ENCODE measurements at regions of chr6 and their contacts with region 1.

Region 1: GRCh38 chr6:116100419-116101301 is at the start of gene NT5DC1:
- DNase-seq: peak; percentile 76 to 88
- ATAC-seq: peak; percentile 94 to 98 (median 96)
- H3K4me3 ChIP-seq: peak within 1 kb of the TSS; percentile 71 to 94 (median 89)
- H3K27ac ChIP-seq: peak within 1 kb of the TSS; percentile 83 to 98 (median 96)
- H3K4me1 ChIP-seq: peaks cover 3 to 58% (median 38%) of the 10 kb centered on the region in 9 donors
- H3K27me3 ChIP-seq: no peaks in the 10 kb centered on the region
- CTCF ChIP-seq: peak in 8 of 9 donors; percentile 16 to 61 (median 44)
- total RNA-seq, gene NT5DC1: 53.9 to 69.7 (median 60.4) TPM

Region 2: DNA sequence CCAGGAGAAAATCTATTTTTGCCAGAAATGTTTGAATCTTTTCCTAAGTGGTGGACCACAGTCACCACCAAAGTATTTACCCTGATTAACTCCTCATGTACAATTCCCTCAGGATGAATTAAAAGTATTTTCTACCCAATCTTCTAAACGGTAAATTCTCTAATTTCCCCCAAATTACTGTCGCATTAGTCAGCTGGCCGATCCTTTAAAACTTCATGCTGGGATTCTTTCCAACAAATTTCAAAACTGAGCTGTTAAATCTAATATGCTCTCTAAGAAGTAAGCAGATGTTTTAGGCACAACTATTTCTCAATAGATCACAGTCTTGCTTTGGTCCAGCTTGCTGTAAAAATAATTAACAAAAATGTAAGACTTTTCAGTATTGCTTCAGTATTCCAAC is 487.2 kb before region 1 on chr6:
- intact Hi-C with region 1: loop called in 1 of 10 experiments (anchors 10 kb)
- DNase-seq: no peak
- ATAC-seq: peak in 1 of 8 donors; percentile 44
- H3K4me3 ChIP-seq: no peak overlapping the region
- H3K27ac ChIP-seq: no peak overlapping the region
- H3K4me1 ChIP-seq: no peaks in the 10 kb centered on the region
- H3K27me3 ChIP-seq: no peaks in the 10 kb centered on the region
- CTCF ChIP-seq: no peak

Region 3: DNA sequence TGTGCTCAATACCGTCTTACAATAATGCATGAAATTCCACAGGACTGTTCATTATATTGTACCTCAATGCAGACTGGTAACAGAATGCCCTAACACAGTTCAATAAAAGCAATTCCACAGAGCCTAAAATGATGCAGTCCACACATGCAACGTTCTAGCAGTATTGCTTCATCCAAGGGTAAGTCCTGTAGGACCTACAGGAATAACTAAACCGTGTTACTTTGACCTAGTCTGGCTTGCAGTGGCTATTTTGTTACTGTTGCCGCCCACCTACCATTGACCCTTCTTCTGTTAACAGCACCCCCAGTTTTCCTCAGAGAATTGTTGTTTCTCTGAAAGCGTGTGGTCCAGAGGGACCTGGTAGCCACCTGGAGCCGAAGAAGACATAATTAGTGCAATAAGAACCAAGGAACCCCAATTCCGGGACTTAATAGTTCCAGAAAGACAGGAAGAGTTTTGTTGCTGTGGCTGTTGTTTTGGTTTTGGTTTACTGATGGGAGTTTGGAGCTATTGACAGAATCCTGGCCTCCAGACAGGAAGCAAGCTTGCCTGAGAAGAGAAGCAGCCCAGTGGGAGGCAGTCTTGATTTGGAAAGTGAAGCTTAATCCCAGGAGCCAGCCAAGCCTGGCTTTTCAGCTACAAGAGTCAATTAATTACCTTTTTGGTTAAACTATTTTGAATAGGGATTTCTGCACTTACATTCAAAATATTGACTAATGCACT is 131.3 kb before region 1 on chr6:
- intact Hi-C with region 1: no loop called
- DNase-seq: peak in 1 of 2 donors; percentile 8
- ATAC-seq: peak in 1 of 8 donors; percentile 63
- H3K4me3 ChIP-seq: no peak overlapping the region
- H3K27ac ChIP-seq: peak overlapping the region in 2 of 10 donors; percentile 25 to 31
- H3K4me1 ChIP-seq: peaks cover 0 to 21% (median 12%) of the 10 kb centered on the region in 9 donors
- H3K27me3 ChIP-seq: no peaks in the 10 kb centered on the region
- CTCF ChIP-seq: peak in 3 of 9 donors; percentile 16 to 36 (median 35)

Region 4: GRCh38 chr6:116010790-116011401 is 89.8 kb before region 1 on chr6:
- intact Hi-C with region 1: loop called (anchors 2 to 5 kb)
- DNase-seq: peak; percentile 54 to 71
- ATAC-seq: peak; percentile 53 to 82 (median 76)
- H3K4me3 ChIP-seq: no peak overlapping the region
- H3K27ac ChIP-seq: peak overlapping the region in 4 of 10 donors; percentile 6 to 82 (median 56)
- H3K4me1 ChIP-seq: peaks cover 0 to 57% (median 25%) of the 10 kb centered on the region in 9 donors
- H3K27me3 ChIP-seq: no peaks in the 10 kb centered on the region
- CTCF ChIP-seq: peak; percentile 48 to 90 (median 85)

Region 5: GRCh38 chr6:116034327-116034726 is 66.3 kb before region 1 on chr6:
- intact Hi-C with region 1: no loop called
- DNase-seq: no peak
- ATAC-seq: peak in 3 of 8 donors; percentile 38 to 49 (median 42)
- H3K4me3 ChIP-seq: no peak overlapping the region
- H3K27ac ChIP-seq: peak overlapping the region in 1 of 10 donors; percentile 27
- H3K4me1 ChIP-seq: peaks cover 0 to 50% (median 22%) of the 10 kb centered on the region in 9 donors
- H3K27me3 ChIP-seq: no peaks in the 10 kb centered on the region
- CTCF ChIP-seq: no peak

Region 6: GRCh38 chr6:116059713-116060571 is 40.7 kb before region 1 on chr6:
- intact Hi-C with region 1: loop called in 1 of 10 experiments (anchors 5 kb)
- DNase-seq: no peak
- ATAC-seq: peak in 6 of 8 donors; percentile 26 to 51 (median 33)
- H3K4me3 ChIP-seq: peak overlapping the region in 9 of 10 donors; percentile 15 to 54 (median 46)
- H3K27ac ChIP-seq: peak overlapping the region in 8 of 10 donors; percentile 37 to 72 (median 62)
- H3K4me1 ChIP-seq: peaks cover 0 to 27% (median 3%) of the 10 kb centered on the region in 9 donors
- H3K27me3 ChIP-seq: no peaks in the 10 kb centered on the region
- CTCF ChIP-seq: no peak